Right ventricle myocardium inferior (tissue), 1 donor: ENCODE measurements at regions of chr1 and their contacts with region 1.

Region 1: DNA sequence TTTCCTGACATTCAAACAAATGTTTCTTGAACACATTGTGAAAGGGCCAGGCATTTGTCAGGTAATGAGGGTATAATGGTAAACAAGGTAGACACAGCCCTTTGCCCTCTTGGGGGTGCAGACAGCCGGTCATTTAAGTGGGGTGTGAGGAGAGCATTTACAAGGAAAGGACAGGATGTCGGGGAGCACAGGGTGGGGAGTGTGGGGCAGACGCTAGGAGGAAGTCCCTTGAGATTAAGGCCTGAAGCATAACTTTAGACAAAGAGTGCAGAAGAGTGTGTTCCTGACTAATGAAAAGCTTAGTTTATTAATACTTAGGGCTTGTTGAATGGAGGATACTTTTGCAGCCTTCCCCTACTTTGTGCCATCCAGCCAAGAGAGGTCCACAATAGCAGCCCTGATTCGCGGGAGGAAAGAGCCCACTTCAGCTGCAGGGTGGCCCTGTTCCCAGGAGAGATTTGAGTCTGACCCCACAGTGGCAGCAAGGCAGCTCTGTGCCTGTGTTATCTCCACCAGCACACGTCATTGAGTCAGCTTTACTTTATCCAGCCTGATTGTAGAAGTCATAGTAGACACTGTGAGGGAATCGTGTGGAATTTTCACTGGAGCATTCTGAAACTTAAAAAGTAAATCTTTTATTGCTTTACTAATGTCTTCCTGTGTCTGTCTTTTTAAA is 35.1 kb downstream of the MPZL1 start:
- DNase-seq: no peak
- ATAC-seq: peak; percentile 85

Region 2: DNA sequence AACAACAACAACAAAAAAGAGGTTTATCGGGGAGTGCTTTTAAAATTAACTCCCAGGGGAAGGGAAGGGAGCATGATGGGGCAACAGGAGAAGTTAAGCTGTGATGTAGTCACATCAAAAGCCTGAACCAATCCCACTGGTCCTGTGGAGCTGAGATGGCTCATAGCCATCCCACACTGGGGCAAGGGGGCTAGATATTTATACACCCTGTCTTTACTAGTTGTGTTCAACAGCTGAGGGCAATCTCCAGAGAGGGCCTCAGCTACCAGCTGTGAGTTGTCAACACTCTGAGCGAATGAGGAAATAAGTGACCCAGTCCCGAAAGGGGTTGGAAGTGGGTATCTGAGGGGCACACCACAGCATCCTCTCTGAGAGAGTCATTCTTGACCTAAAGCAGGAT is 172.3 kb before region 1 on chr1:
- intact Hi-C with region 1: no loop called
- DNase-seq: no peak
- ATAC-seq: no peak

Region 3: DNA sequence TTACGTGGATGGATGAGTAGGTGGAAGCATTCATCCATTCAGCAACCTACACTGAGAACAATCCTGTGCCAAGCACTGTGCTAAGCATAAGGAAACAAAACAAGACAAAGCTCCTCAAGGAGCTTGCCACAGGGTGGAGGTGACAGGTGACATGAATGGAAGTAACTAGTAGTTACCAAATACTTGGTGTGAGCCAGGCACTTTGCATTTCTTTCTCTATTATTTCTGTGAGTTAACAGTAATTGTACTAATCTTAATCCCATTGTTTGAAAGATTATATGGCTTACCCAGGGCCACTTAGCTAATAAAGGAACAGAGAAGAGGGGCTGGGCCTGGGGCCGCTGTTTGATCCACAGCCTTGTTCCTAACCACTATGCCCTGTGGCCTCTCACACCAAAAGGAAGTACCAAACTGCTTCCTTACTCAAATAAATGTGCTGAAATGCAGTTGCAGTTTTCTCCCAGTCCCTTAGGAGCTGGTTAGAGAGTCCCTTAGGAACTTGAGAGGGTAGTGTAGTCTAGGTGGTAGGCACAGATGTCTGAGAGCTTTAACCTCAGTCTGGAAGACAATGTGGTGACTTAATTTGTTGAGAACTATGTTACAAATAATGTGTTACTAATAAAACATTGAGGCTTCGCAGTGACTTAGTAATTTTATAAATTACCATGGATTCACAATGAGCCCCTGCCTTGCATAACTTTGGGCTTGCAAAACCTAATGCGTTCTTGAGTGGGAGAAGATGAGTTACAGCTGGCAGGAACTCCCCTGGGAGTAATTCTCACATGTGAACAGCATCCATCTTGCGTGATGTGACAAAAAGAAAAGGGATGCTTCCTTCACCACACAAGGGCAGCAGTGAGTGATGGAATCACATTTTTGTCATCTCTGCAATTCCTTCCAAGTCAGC is 34.7 kb after region 1 on chr1:
- intact Hi-C with region 1: loop called (anchors 5 kb)
- DNase-seq: no peak
- ATAC-seq: peak; percentile 59

Region 4: GRCh38 chr1:167881069-167881468 is 124.2 kb after region 1 on chr1:
- intact Hi-C with region 1: no loop called
- DNase-seq: no peak
- ATAC-seq: no peak